ENCODE measurements at regions of chr13 and their contacts with region 1.

Region 1: GRCh38 chr13:41061075-41061913 is at the start of gene WBP4:
- DNase-seq: peak; percentile 88
- ATAC-seq: peak; percentile 68
- H3K4me3 ChIP-seq: peak within 1 kb of the TSS; percentile 82
- H3K27ac ChIP-seq: peak within 1 kb of the TSS; percentile 90
- H3K4me1 ChIP-seq: peaks cover 40% of the 10 kb centered on the region
- H3K27me3 ChIP-seq: no peaks in the 10 kb centered on the region
- CTCF ChIP-seq: no peak
- total RNA-seq, gene WBP4: 6.4 and 7.3 TPM in 2 replicates

Region 2: DNA sequence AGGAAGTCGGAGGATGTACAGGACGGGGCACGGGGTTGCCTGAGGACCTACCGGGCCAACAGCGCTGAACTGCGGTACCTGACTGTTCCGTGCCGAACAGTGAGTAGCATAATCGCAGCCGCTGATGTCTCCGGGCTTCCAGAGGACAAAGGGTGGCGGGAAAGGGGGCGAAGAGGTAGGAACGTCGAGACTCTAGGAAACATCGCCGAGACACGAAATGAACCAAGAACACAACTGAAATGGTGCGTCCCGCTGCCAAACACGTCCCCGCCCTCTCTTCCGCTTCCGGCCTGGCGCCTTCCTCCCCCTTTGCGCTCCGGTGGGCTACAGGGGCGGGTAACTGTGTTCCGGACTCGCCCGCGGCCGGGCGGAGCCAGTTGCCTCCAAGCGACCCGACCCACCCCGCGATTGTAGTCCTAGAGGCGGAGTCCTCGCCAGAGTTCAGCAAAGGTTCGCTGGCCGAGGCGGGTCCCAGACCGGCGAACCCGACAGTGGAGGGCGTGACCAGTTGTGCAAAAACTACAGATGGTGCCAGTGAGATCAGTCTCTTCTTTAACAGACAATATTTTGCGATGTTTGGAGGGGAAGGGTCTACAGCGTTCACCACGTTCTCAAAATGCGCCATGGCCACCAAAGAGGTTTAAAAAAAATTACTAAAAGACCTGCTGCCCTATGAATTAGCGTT is 290.2 kb before region 1 on chr13 and contains the start of gene MRPS31:
- CTCF ChIA-PET with region 1: no interaction called
- POLR2A ChIA-PET with region 1: no interaction called
- intact Hi-C with region 1: loop called (anchors 10 kb)
- DNase-seq: peak; percentile 89
- ATAC-seq: peak; percentile 99
- H3K4me3 ChIP-seq: peak within 1 kb of the TSS; percentile 97
- H3K27ac ChIP-seq: peak within 1 kb of the TSS; percentile 61
- H3K4me1 ChIP-seq: peaks cover 7% of the 10 kb centered on the region; the same call in 1 of the 2 replicates
- H3K27me3 ChIP-seq: no peaks in the 10 kb centered on the region
- CTCF ChIP-seq: no peak
- total RNA-seq, gene MRPS31: 13.3 and 14.6 TPM in 2 replicates

Region 3: GRCh38 chr13:40961214-40961613 is 100.1 kb before region 1 on chr13:
- CTCF ChIA-PET with region 1: no interaction called
- POLR2A ChIA-PET with region 1: no interaction called
- intact Hi-C with region 1: no loop called
- DNase-seq: no peak
- ATAC-seq: no peak
- H3K4me3 ChIP-seq: no peak overlapping the region
- H3K27ac ChIP-seq: no peak overlapping the region
- H3K4me1 ChIP-seq: peaks cover 7% of the 10 kb centered on the region; the same call in 1 of the 2 replicates
- H3K27me3 ChIP-seq: no peaks in the 10 kb centered on the region
- CTCF ChIP-seq: no peak

Region 4: DNA sequence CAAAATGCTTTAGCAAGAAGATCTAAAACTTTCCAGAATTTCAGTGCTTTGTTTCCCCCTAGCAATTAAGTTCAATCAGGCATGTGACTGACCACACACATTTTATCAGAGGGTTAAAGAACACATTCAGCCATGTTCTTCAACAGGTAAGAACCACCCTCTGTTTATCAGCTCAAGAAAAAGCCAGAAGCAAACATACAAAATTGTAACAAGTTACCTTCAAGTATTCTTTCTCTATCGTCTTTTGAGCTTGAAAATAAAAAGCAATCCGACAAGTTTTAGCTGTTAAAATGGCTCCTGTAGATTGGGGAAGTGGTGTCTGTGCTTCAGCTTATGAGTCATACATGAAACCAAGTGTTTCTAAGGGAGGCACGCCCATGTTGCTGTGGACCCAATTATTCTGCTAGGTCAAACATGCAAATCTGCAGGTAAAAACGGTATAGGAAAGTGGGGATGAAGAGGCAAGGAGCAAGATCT is 42.2 kb before region 1 on chr13 and contains the start of gene ELF1:
- CTCF ChIA-PET with region 1: no interaction called
- POLR2A ChIA-PET with region 1: no interaction called
- intact Hi-C with region 1: no loop called
- DNase-seq: peak; percentile 78
- ATAC-seq: peak; percentile 88
- H3K4me3 ChIP-seq: peak within 1 kb of the TSS; percentile 74
- H3K27ac ChIP-seq: peak within 1 kb of the TSS; percentile 91
- H3K4me1 ChIP-seq: peaks cover 14% of the 10 kb centered on the region
- H3K27me3 ChIP-seq: no peaks in the 10 kb centered on the region
- CTCF ChIP-seq: no peak
- total RNA-seq, gene ELF1: 15.3 and 17.7 TPM in 2 replicates

Region 5: GRCh38 chr13:41137951-41138350 is 76.7 kb after region 1 on chr13:
- CTCF ChIA-PET with region 1: interaction called, 3 read pairs
- POLR2A ChIA-PET with region 1: no interaction called
- intact Hi-C with region 1: loop called (anchors 5 kb)
- DNase-seq: peak; percentile 81
- ATAC-seq: peak; percentile 54
- H3K4me3 ChIP-seq: peak overlapping the region; percentile 41; the same call in 1 of the 2 replicates
- H3K27ac ChIP-seq: peak overlapping the region; percentile 99
- H3K4me1 ChIP-seq: peaks cover 41% of the 10 kb centered on the region
- H3K27me3 ChIP-seq: no peaks in the 10 kb centered on the region
- CTCF ChIP-seq: no peak

Region 6: GRCh38 chr13:41216160-41216559 is 154.9 kb after region 1 on chr13:
- CTCF ChIA-PET with region 1: no interaction called
- POLR2A ChIA-PET with region 1: no interaction called
- intact Hi-C with region 1: loop called (anchors 1 kb)
- DNase-seq: peak; percentile 55
- ATAC-seq: peak; percentile 93
- H3K4me3 ChIP-seq: no peak overlapping the region
- H3K27ac ChIP-seq: peak overlapping the region; percentile 45; the same call in 1 of the 2 replicates
- H3K4me1 ChIP-seq: peaks cover 10% of the 10 kb centered on the region
- H3K27me3 ChIP-seq: no peaks in the 10 kb centered on the region
- CTCF ChIP-seq: no peak

Region 7: GRCh38 chr13:41310963-41311606 is 249.8 kb after region 1 on chr13 and contains the start of gene NAA16:
- CTCF ChIA-PET with region 1: no interaction called
- POLR2A ChIA-PET with region 1: no interaction called
- intact Hi-C with region 1: loop called (anchors 10 kb)
- DNase-seq: peak; percentile 86
- ATAC-seq: peak; percentile 77
- H3K4me3 ChIP-seq: peak within 1 kb of the TSS; percentile 89
- H3K27ac ChIP-seq: peak within 1 kb of the TSS; percentile 68
- H3K4me1 ChIP-seq: peaks cover 18% of the 10 kb centered on the region; the same call in 1 of the 2 replicates
- H3K27me3 ChIP-seq: no peaks in the 10 kb centered on the region
- CTCF ChIP-seq: no peak
- total RNA-seq, gene NAA16: 9.8 and 11.3 TPM in 2 replicates

Measured in PC-3 (cell line).